ENCODE measurements at regions of chrX and their contacts with region 1.

Region 1: DNA sequence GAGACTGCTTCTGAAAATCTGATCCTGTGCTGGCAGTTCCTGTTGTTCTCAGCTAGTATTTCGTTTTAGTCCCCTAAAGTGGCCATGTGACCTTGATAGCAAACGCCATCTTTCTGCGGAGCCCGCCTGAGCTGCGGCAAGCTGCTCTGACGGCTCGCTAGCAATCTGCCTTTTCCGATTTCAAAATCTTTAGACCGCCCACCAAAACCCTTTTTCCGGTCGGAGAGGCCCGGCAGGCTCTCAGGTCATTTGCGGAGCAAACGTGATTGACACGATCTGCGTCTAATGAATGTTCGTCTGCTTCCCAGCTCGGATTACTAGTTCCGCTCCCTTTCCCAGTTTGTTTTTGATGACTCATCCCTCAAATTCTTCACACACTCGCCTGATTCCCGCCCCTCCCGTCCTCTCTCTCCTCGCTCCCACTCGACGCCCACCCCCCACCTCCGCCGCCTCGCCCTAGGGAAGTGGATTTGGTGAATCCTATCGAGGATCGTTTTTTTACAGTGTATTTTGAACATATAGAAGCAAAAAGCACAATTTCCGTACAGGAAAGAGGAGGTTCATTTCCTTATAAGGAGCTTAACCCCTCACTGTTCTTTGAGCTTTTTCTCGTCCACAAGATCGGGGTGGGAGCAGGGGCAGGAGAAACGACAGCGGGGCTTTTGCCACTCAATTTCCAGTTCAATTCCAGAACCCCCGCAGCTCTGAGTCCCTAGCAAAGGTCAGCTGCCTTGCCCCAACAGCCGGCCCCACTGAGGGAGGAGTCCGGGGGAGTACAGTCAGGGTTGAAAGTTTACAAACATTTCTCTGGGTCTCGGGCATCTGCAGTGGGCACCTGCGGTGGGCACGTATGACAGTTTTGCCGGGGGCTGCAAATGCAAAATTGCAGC is 37.5 kb downstream of the NLGN3 start:
- DNase-seq: peak; percentile 90 to 95
- H3K4me3 ChIP-seq: peak overlapping the region; percentile 32
- H3K4me3 Mint-ChIP-seq: peak overlapping the region; percentile 76
- H3K27ac Mint-ChIP-seq: peak overlapping the region; percentile 96
- H3K4me1 ChIP-seq: peaks cover 47% of the 10 kb centered on the region
- H3K4me1 Mint-ChIP-seq: peaks cover 17% of the 10 kb centered on the region
- H3K27me3 ChIP-seq: no peaks in the 10 kb centered on the region
- H3K27me3 Mint-ChIP-seq: no peaks in the 10 kb centered on the region
- CTCF ChIP-seq: no peak

Region 2: DNA sequence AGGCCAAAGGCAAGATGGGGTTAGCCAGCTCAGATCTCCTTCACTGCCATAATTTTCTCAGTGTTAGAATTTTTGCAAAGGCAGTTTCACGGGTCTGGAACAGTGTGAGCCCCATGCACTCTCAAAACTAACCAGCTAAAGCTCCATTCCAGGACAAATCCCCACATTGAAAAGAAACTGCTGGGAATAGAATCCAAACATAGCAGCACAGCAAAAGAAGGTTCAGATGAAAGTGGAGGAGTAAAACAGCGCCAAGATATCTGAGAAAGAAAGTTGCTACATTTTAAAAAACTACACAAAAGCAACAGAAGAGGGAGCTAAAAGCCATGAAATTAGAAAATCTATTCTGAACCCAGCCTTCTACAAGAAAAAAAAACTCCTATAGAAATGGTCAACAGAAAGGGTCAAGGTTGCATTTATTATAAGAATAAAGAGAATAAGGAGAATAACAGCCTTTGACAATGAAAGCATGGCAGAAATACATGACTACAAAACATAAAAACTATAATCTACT is 211.6 kb before region 1 on chrX:
- CTCF ChIA-PET with region 1: interaction called, 4 read pairs
- POLR2A ChIA-PET with region 1: interaction called, 4 read pairs
- intact Hi-C with region 1: loop called (anchors 1 kb)
- DNase-seq: no peak
- H3K4me3 ChIP-seq: no peak overlapping the region
- H3K4me3 Mint-ChIP-seq: no peak overlapping the region
- H3K27ac Mint-ChIP-seq: no peak overlapping the region
- H3K4me1 ChIP-seq: no peaks in the 10 kb centered on the region
- H3K4me1 Mint-ChIP-seq: no peaks in the 10 kb centered on the region
- H3K27me3 ChIP-seq: no peaks in the 10 kb centered on the region
- H3K27me3 Mint-ChIP-seq: peaks cover 3% of the 10 kb centered on the region
- CTCF ChIP-seq: peak in 1 of 2 experiments; percentile 24

Region 3: GRCh38 chrX:71068049-71068763 is 113.9 kb before region 1 on chrX and contains the start of gene SNX12:
- CTCF ChIA-PET with region 1: no interaction called
- POLR2A ChIA-PET with region 1: no interaction called
- intact Hi-C with region 1: loop called (anchors 5 kb)
- DNase-seq: peak; percentile 92 to 93
- H3K4me3 ChIP-seq: peak within 1 kb of the TSS; percentile 66
- H3K4me3 Mint-ChIP-seq: peak within 1 kb of the TSS; percentile 100
- H3K27ac Mint-ChIP-seq: peak within 1 kb of the TSS; percentile 94
- H3K4me1 ChIP-seq: 0 out of 2 replicates have a peak, but pooled peaks cover 5% of the 10 kb centered on the region
- H3K4me1 Mint-ChIP-seq: peaks cover 28% of the 10 kb centered on the region
- H3K27me3 ChIP-seq: no peaks in the 10 kb centered on the region
- H3K27me3 Mint-ChIP-seq: no peaks in the 10 kb centered on the region
- CTCF ChIP-seq: no peak
- total RNA-seq, gene SNX12: 88.0 and 89.0 TPM in 2 replicates

Region 4: GRCh38 chrX:71103110-71103983 is 78.8 kb before region 1 on chrX:
- CTCF ChIA-PET with region 1: no interaction called
- POLR2A ChIA-PET with region 1: interaction called, 17 read pairs
- intact Hi-C with region 1: no loop called
- DNase-seq: peak; percentile 75 to 86
- H3K4me3 ChIP-seq: peak overlapping the region; percentile 27
- H3K4me3 Mint-ChIP-seq: peak overlapping the region; percentile 78
- H3K27ac Mint-ChIP-seq: peak overlapping the region; percentile 89
- H3K4me1 ChIP-seq: peaks cover 9% of the 10 kb centered on the region
- H3K4me1 Mint-ChIP-seq: peaks cover 13% of the 10 kb centered on the region
- H3K27me3 ChIP-seq: no peaks in the 10 kb centered on the region
- H3K27me3 Mint-ChIP-seq: no peaks in the 10 kb centered on the region
- CTCF ChIP-seq: no peak

Region 5: DNA sequence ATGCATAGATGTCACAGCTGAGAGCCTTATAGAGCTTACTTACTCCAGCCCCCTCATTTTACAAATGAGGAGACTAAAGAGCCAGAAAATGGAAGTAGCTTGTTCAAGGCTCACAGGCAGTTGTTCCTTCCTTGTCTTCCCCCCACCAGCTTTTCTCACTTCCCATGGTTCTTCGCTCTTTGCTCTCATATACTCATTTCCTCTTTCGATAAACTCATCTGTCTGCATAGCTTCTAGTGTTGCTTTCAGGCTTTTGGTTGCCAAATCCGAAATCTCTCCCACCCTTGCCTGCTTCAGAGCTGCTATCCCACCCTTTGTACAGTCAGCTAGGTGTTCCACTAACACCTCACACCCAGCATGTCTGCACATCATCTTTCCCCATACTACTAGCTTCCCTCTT is 15.9 kb after region 1 on chrX:
- CTCF ChIA-PET with region 1: no interaction called
- POLR2A ChIA-PET with region 1: no interaction called
- intact Hi-C with region 1: no loop called
- DNase-seq: no peak
- H3K4me3 ChIP-seq: no peak overlapping the region
- H3K4me3 Mint-ChIP-seq: no peak overlapping the region
- H3K27ac Mint-ChIP-seq: no peak overlapping the region
- H3K4me1 ChIP-seq: no peaks in the 10 kb centered on the region; the same call in 1 of the 2 replicates
- H3K4me1 Mint-ChIP-seq: peaks cover 33% of the 10 kb centered on the region
- H3K27me3 ChIP-seq: no peaks in the 10 kb centered on the region
- H3K27me3 Mint-ChIP-seq: no peaks in the 10 kb centered on the region
- CTCF ChIP-seq: no peak

Region 6: GRCh38 chrX:71216485-71216884 is 34.3 kb after region 1 on chrX:
- CTCF ChIA-PET with region 1: no interaction called
- POLR2A ChIA-PET with region 1: interaction called, 8 read pairs
- intact Hi-C with region 1: loop called (anchors 1 kb)
- DNase-seq: no peak
- H3K4me3 ChIP-seq: peak overlapping the region; percentile 32
- H3K4me3 Mint-ChIP-seq: peak overlapping the region; percentile 65
- H3K27ac Mint-ChIP-seq: peak overlapping the region; percentile 73
- H3K4me1 ChIP-seq: peaks cover 24% of the 10 kb centered on the region
- H3K4me1 Mint-ChIP-seq: peaks cover 40% of the 10 kb centered on the region
- H3K27me3 ChIP-seq: no peaks in the 10 kb centered on the region
- H3K27me3 Mint-ChIP-seq: no peaks in the 10 kb centered on the region
- CTCF ChIP-seq: no peak

Region 7: DNA sequence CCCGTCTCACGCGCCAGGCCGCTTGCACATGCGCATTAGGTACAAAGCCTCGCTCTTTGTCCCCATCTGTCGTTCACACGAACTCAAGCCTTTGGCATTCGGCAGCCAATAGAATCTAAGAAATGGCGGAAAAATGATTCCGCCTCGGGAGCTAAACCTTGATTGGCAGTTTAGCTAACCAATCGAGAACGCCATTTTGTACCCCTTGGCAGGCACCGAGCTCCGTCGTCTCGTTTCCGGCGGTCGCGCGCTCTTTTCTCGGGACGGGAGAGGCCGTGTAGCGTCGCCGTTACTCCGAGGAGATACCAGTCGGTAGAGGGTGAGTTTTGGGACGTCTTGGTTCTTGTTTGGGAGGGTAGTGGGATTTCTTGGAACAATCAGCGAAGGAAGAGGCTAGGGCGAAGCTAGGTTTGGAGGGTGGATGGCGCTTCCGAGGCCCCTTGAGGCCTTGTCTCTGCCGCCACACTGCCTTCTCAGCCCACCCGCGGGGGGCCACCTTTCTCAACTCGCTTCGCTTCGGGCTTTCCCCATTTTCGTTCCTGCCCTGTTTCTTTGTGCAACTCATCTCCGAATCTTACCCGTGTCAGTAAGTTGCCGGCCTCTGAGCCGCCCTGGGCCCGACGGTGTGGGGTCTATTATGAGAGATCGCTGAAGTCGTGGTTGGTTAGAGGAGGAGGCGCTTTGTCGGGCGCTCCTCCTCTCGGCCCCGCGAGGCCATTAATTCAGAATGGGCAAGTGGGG is 101.4 kb after region 1 on chrX and contains the start of gene NONO:
- CTCF ChIA-PET with region 1: interaction called, 5 read pairs
- POLR2A ChIA-PET with region 1: interaction called, 34 read pairs
- intact Hi-C with region 1: loop called (anchors 2 kb)
- DNase-seq: peak; percentile 93 to 96
- H3K4me3 ChIP-seq: peak within 1 kb of the TSS; percentile 38
- H3K4me3 Mint-ChIP-seq: peak within 1 kb of the TSS; percentile 98
- H3K27ac Mint-ChIP-seq: peak within 1 kb of the TSS; percentile 100
- H3K4me1 ChIP-seq: 0 out of 2 replicates have a peak, but pooled peaks cover 8% of the 10 kb centered on the region
- H3K4me1 Mint-ChIP-seq: no peaks in the 10 kb centered on the region
- H3K27me3 ChIP-seq: no peaks in the 10 kb centered on the region
- H3K27me3 Mint-ChIP-seq: no peaks in the 10 kb centered on the region
- CTCF ChIP-seq: no peak
- total RNA-seq, gene NONO: 477 and 482 TPM in 2 replicates

Region 8: GRCh38 chrX:71301195-71301924 is 119.2 kb after region 1 on chrX and contains the start of gene ITGB1BP2:
- CTCF ChIA-PET with region 1: no interaction called
- POLR2A ChIA-PET with region 1: no interaction called
- intact Hi-C with region 1: no loop called
- DNase-seq: peak in 1 of 2 experiments; percentile 33
- H3K4me3 ChIP-seq: no peak within 1 kb of the TSS
- H3K4me3 Mint-ChIP-seq: no peak within 1 kb of the TSS
- H3K27ac Mint-ChIP-seq: no peak within 1 kb of the TSS
- H3K4me1 ChIP-seq: no peaks in the 10 kb centered on the region
- H3K4me1 Mint-ChIP-seq: peaks cover 13% of the 10 kb centered on the region
- H3K27me3 ChIP-seq: no peaks in the 10 kb centered on the region
- H3K27me3 Mint-ChIP-seq: no peaks in the 10 kb centered on the region
- CTCF ChIP-seq: no peak
- total RNA-seq, gene ITGB1BP2: 4.2 and 6.1 TPM in 2 replicates